AG04449 (cell line): ENCODE measurements at regions of chr16 and their contacts with region 1.

Region 1: GRCh38 chr16:48623304-48624016 is 13.5 kb upstream of the N4BP1 start:
- DNase-seq: peak; percentile 14
- H3K4me3 ChIP-seq: peak overlapping the region; percentile 54
- CTCF ChIP-seq: peak; percentile 99

Region 2: GRCh38 chr16:48231727-48232492 is 391.6 kb before region 1 on chr16:
- CTCF ChIA-PET with region 1: interaction called, 80 read pairs
- POLR2A ChIA-PET with region 1: no interaction called
- DNase-seq: peak; percentile 3
- H3K4me3 ChIP-seq: no peak overlapping the region
- CTCF ChIP-seq: peak; percentile 68

Region 3: DNA sequence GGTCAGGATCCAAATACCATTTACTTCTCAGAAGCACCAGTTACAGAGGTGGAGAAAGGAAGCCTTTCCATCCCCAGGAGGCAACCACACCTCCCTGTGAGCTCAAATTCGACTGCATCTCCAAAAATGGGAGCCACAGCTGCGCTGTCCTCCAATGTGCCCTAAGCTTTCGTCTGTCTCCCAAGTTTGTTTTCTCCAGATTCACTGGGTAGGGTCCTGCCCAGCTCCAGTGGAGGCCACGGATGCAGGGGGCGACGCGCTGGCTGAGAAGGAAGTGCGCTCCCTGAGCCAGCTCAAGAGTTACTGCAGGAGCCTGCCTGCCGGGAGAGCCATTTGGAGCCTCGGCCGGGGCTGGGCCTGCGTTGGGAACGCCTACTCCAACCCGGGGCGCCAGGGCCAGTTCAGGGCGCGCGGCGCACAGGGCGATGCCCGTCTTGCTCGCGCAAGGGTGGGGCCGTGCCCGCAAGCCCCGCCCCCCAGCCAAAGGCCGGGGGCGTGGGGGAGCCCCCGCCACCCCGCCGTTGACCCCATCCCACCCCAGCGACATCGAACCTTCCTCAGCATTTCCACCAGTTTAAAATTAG is 257.8 kb before region 1 on chr16:
- CTCF ChIA-PET with region 1: interaction called, 61 read pairs
- POLR2A ChIA-PET with region 1: interaction called, 3 read pairs
- DNase-seq: peak; percentile 19
- H3K4me3 ChIP-seq: peak overlapping the region; percentile 61
- CTCF ChIP-seq: peak; percentile 10

Region 4: DNA sequence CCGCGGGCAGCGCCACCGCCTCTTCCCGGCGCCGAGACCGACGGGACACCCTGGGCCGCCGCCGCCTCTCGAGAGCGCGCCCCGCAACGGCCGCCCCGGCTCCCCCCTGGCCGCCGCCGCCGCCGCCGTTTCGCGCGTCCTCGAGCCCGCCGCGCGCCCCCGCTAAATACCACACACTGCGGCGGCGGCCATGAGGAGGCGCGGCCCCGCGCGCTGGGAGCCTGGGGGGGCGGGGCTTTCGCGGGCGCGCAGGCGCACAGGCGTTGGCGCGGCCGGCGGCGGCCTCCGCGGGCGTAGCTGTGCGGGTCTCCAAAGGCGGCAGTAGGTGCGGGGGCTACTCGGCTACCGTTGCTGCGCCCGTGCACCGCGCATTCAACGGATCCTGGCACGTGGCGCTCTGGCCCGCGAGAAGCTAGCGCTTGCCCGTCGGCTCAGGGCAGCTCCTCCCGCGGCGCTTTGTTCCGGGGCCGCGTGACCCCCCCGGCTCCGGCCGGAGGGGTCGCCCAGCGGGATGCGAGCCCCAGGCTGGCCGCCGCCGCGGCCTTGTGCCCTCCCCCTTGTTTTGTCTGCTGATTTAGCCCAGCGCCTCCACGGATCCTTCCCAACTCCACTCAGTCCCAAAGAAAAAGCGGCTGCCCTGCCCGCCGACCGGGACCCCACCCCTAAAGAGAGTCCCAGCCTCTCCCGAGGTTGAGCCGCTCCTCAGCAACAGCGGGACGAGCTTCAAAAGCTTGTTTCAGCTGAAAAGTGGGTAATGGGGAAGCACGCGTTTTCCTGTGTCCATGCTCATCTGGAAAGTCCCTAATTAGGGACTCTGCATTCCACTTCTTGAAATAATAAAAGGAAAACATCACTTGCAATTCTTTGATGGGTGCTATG is 237.9 kb before region 1 on chr16 and contains the start of gene SIAH1:
- CTCF ChIA-PET with region 1: interaction called, 13 read pairs
- POLR2A ChIA-PET with region 1: interaction called, 3 read pairs
- DNase-seq: peak; percentile 33
- H3K4me3 ChIP-seq: peak within 1 kb of the TSS; percentile 80
- CTCF ChIP-seq: no peak

Region 5: GRCh38 chr16:48542020-48542473 is 81.4 kb before region 1 on chr16:
- CTCF ChIA-PET with region 1: interaction called, 25 read pairs
- POLR2A ChIA-PET with region 1: no interaction called
- DNase-seq: no peak
- H3K4me3 ChIP-seq: no peak overlapping the region
- CTCF ChIP-seq: peak; percentile 66

Region 6: DNA sequence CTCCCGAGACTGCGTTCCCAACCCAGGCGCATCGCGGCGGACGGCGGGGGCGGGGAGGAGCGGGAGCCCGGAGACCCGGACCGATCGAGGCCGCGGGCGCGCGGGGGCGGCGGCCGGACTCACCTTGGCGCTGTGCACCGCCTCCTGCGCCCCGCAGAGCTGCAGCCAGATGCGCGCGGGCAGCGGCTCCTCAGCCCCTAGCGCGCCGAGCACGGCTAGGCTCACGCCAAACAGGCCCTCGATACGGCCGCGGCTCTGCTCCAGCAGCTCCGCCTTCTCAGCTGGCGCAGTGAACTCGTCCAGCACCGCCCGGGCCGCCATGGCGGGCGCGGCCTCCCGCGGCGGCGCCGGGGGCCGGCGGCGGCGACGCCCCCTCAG is 13.8 kb before region 1 on chr16:
- CTCF ChIA-PET with region 1: interaction called, 59 read pairs
- POLR2A ChIA-PET with region 1: no interaction called
- DNase-seq: no peak
- H3K4me3 ChIP-seq: peak overlapping the region; percentile 97
- CTCF ChIP-seq: no peak

Region 7: DNA sequence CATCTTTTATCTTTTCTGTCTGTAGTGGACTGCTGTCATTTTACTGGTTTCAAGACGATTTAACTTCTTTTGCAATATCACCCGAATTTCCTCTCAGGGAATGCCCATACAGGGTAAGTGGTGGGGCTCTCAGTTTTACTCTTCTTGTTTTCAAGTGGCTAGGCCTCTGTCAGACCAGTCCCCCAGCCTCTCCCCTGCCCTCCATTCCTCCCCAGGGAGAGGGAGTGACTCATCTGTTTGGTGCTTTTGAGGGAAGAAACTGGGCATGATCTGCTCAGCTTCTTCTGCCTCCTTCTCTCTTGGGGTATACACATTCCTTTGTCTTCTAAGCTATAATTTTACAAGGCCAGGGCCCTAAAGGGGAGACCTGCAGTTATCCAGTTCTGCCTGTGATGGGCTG is 326.2 kb after region 1 on chr16:
- CTCF ChIA-PET with region 1: no interaction called
- POLR2A ChIA-PET with region 1: no interaction called
- DNase-seq: no peak
- H3K4me3 ChIP-seq: no peak overlapping the region
- CTCF ChIP-seq: no peak